Astrocyte of the cerebellum (primary cell): ENCODE measurements at regions of chr2 and their contacts with region 1.

Region 1: DNA sequence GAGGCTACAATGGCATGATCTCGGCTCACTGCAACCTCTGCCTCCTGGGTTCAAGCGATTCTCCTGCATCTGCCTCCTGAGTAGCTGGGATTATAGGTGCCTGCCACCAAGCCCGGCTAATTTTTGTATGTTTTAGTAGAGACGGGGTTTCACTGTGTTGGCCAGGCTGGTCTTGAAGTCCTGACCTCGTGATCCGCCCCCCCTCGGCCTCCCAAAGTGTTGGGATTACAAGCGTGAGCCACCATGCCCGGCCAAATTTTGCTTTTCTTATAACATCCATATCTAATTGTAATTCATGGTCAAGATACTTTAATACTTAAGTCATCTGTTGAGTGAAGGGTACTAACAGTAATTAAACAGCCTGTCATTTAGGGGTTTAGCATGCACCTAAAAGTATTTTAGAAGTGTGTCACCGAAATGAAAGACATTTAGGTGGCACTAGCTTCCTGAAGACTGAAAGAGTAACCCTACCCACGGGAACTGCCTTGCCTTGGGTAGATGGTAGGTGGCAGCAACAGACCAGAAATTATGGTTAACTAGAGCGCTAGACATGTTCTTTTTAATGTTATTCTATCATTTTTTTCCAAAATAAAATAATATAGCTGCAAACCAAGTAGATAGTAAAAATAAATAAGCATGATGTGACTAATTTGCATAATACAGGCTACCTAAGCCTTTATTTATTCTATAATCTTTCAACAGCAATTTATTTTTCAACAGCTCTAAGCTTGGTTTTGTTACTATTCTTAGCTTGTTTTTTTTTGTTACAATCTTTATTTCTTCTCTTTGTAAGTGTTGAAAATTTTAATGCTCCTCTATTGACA is 8.6 kb upstream of the ACYP2 start:
- DNase-seq: peak; percentile 34
- H3K4me3 ChIP-seq: no peak overlapping the region
- CTCF ChIP-seq: peak; percentile 83

Region 2: DNA sequence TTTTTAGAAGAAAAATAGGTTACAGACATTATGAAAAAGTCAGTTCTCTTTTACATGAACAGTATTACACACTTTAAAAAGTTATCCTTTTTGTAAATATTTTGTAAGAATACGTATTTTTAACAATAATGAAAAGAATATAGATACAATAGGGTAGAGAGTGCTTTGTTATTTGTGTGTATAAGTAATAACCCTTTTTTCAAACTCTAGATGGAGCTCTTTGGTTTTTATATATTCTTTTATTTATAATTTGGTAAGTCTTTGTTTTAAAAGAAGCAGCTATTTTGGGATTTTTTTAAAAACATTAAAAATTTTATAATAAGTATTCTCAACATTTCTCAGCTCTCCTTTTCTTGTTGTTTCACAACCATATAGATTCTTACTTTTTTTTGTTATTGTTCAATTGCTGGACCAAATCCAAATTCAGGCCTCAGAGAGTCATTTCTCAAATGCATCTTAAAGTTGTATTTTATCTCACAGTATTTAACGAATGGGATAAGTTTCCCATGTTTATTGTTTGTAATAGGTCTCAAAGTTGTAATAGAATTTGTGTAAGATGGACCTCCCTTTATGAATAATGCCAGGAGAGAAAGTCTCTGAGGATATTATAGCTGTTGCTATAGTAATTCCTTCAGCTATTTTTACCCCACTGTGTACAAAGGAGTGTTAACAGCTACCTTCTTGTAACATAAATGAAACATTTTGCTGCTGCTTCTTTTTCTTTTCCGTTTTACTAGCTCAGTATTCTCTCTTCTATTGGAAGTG is 55.0 kb after region 1 on chr2:
- in situ Hi-C with region 1: loop called (anchors 5 kb)
- DNase-seq: no peak
- H3K4me3 ChIP-seq: no peak overlapping the region
- CTCF ChIP-seq: no peak